Activated B cell treated with CpG ODN at 0.5 μM for 24 hours (primary cell): ENCODE measurements at regions of chr5 and their contacts with region 1.

Region 1: GRCh38 chr5:146188358-146188757 is 5.9 kb upstream of the LARS1 start:
- DNase-seq: no peak
- ATAC-seq: no peak
- H3K4me3 Mint-ChIP-seq: no peak overlapping the region
- H3K27ac Mint-ChIP-seq: no peak overlapping the region
- H3K4me1 Mint-ChIP-seq: no peaks in the 10 kb centered on the region
- H3K27me3 Mint-ChIP-seq: peaks cover 14% of the 10 kb centered on the region
- CTCF ChIP-seq: no peak

Region 2: GRCh38 chr5:146049014-146049703 is 139.2 kb before region 1 on chr5:
- CTCF ChIA-PET with region 1: no interaction called
- POLR2A ChIA-PET with region 1: no interaction called
- intact Hi-C with region 1: no loop called
- DNase-seq: no peak
- ATAC-seq: no peak
- H3K4me3 Mint-ChIP-seq: no peak overlapping the region
- H3K27ac Mint-ChIP-seq: no peak overlapping the region
- H3K4me1 Mint-ChIP-seq: no peaks in the 10 kb centered on the region
- H3K27me3 Mint-ChIP-seq: peaks cover 7% of the 10 kb centered on the region
- CTCF ChIP-seq: no peak

Region 3: DNA sequence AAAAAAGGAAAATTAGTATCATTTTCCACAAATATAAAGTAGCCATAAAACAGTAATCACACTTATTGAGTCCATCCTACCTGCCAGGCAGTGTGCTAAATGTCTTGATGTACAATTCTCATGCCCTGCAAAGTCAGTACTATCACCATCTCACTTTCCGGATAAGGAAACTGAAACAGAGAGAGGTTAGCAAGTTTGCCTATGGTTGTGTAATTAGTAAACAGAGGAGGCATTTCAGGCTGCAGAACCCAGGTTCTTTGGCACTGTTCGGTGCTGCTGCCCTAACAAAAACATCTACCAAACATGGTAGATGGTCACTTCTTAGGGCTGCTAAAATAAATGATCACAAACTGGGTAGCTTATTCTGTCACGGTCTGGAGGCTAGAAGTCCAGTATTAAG is 105.6 kb before region 1 on chr5:
- CTCF ChIA-PET with region 1: no interaction called
- POLR2A ChIA-PET with region 1: no interaction called
- intact Hi-C with region 1: no loop called
- DNase-seq: no peak
- ATAC-seq: no peak
- H3K4me3 Mint-ChIP-seq: no peak overlapping the region
- H3K27ac Mint-ChIP-seq: no peak overlapping the region
- H3K4me1 Mint-ChIP-seq: peaks cover 10% of the 10 kb centered on the region
- H3K27me3 Mint-ChIP-seq: peaks cover 7% of the 10 kb centered on the region
- CTCF ChIP-seq: no peak

Region 4: GRCh38 chr5:146116361-146116760 is 72.0 kb before region 1 on chr5:
- CTCF ChIA-PET with region 1: no interaction called
- POLR2A ChIA-PET with region 1: interaction called, 14 read pairs
- intact Hi-C with region 1: no loop called
- DNase-seq: no peak
- ATAC-seq: no peak
- H3K4me3 Mint-ChIP-seq: no peak overlapping the region
- H3K27ac Mint-ChIP-seq: no peak overlapping the region
- H3K4me1 Mint-ChIP-seq: no peaks in the 10 kb centered on the region
- H3K27me3 Mint-ChIP-seq: no peaks in the 10 kb centered on the region
- CTCF ChIP-seq: no peak

Region 5: GRCh38 chr5:146283344-146283761 is 95.0 kb after region 1 on chr5:
- CTCF ChIA-PET with region 1: no interaction called
- POLR2A ChIA-PET with region 1: no interaction called
- intact Hi-C with region 1: no loop called
- DNase-seq: no peak
- ATAC-seq: no peak
- H3K4me3 Mint-ChIP-seq: no peak overlapping the region
- H3K27ac Mint-ChIP-seq: no peak overlapping the region
- H3K4me1 Mint-ChIP-seq: no peaks in the 10 kb centered on the region
- H3K27me3 Mint-ChIP-seq: no peaks in the 10 kb centered on the region
- CTCF ChIP-seq: no peak